ENCODE measurements at regions of chr11 and their contacts with region 1.

Region 1: DNA sequence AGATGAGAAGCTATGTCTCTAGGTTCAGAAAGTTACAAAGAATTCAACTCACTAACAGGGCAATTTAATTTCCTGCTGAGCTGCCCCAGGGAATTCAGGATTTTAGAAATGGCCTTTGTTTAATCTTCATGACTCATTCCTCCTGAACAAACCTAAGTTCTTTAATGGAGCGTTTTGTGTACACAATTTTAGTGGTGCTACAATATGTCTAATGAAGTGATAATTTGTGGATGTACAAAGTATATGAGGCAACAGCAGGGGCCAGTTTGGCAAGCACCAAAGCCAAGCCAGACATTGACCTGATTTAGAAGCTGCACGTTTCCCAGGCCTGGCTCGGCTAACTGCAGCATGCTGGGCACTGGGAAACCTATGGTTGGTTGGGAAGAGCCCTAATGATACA is 34.4 kb upstream of the HEPHL1 start:
- DNase-seq: peak; percentile 32
- H3K4me3 Mint-ChIP-seq: no peak overlapping the region
- H3K27ac Mint-ChIP-seq: peak overlapping the region; percentile 77
- H3K4me1 Mint-ChIP-seq: peaks cover 29% of the 10 kb centered on the region
- H3K27me3 Mint-ChIP-seq: no peaks in the 10 kb centered on the region
- CTCF ChIP-seq: no peak

Region 2: DNA sequence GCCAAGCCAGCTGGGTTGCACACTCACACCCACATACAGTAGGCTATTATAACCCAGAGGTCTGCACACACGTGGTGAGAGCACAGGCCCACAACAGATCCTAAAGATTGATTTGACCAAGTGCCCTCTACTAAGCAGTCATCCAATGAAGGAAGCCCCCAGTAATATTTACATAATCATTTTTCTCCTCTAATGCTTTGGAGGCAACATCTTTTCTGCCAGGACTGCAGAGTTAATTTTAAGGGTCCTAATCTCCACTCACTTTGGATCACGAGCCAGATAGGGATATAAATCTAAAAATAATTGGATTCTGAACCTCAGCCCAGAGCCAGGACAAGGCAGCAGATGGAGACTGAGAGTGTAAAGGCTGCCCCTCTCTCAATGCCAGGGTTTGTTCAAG is 1066.4 kb before region 1 on chr11:
- CTCF ChIA-PET with region 1: no interaction called
- intact Hi-C with region 1: no loop called
- DNase-seq: no peak
- H3K4me3 Mint-ChIP-seq: no peak overlapping the region
- H3K27ac Mint-ChIP-seq: no peak overlapping the region
- H3K4me1 Mint-ChIP-seq: no peaks in the 10 kb centered on the region
- H3K27me3 Mint-ChIP-seq: no peaks in the 10 kb centered on the region
- CTCF ChIP-seq: no peak

Region 3: GRCh38 chr11:93524173-93524536 is 462.6 kb before region 1 on chr11:
- CTCF ChIA-PET with region 1: no interaction called
- intact Hi-C with region 1: no loop called
- DNase-seq: no peak
- H3K4me3 Mint-ChIP-seq: no peak overlapping the region
- H3K27ac Mint-ChIP-seq: no peak overlapping the region
- H3K4me1 Mint-ChIP-seq: peaks cover 29% of the 10 kb centered on the region
- H3K27me3 Mint-ChIP-seq: no peaks in the 10 kb centered on the region
- CTCF ChIP-seq: no peak

Region 4: GRCh38 chr11:93817426-93818348 is 169.0 kb before region 1 on chr11:
- CTCF ChIA-PET with region 1: no interaction called
- intact Hi-C with region 1: no loop called
- DNase-seq: no peak
- H3K4me3 Mint-ChIP-seq: no peak overlapping the region
- H3K27ac Mint-ChIP-seq: no peak overlapping the region
- H3K4me1 Mint-ChIP-seq: no peaks in the 10 kb centered on the region
- H3K27me3 Mint-ChIP-seq: no peaks in the 10 kb centered on the region
- CTCF ChIP-seq: no peak

Region 5: GRCh38 chr11:94058630-94059029 is 71.9 kb after region 1 on chr11:
- CTCF ChIA-PET with region 1: no interaction called
- intact Hi-C with region 1: no loop called
- DNase-seq: no peak
- H3K4me3 Mint-ChIP-seq: no peak overlapping the region
- H3K27ac Mint-ChIP-seq: no peak overlapping the region
- H3K4me1 Mint-ChIP-seq: no peaks in the 10 kb centered on the region
- H3K27me3 Mint-ChIP-seq: no peaks in the 10 kb centered on the region
- CTCF ChIP-seq: no peak

Region 6: GRCh38 chr11:94128746-94129511 is 142.2 kb after region 1 on chr11 and contains the start of gene PANX1:
- CTCF ChIA-PET with region 1: no interaction called
- intact Hi-C with region 1: loop called (anchors 2 kb)
- DNase-seq: peak; percentile 71
- H3K4me3 Mint-ChIP-seq: no peak within 1 kb of the TSS
- H3K27ac Mint-ChIP-seq: peak within 1 kb of the TSS; percentile 86
- H3K4me1 Mint-ChIP-seq: peaks cover 17% of the 10 kb centered on the region
- H3K27me3 Mint-ChIP-seq: no peaks in the 10 kb centered on the region
- CTCF ChIP-seq: no peak
- total RNA-seq, gene PANX1: 18.6 and 20.2 TPM in 2 replicates

Measured in Calu3 (cell line).